CD8-positive, alpha-beta memory T cell (primary cell): ENCODE measurements at regions of chr11 and their contacts with region 1.

Region 1: DNA sequence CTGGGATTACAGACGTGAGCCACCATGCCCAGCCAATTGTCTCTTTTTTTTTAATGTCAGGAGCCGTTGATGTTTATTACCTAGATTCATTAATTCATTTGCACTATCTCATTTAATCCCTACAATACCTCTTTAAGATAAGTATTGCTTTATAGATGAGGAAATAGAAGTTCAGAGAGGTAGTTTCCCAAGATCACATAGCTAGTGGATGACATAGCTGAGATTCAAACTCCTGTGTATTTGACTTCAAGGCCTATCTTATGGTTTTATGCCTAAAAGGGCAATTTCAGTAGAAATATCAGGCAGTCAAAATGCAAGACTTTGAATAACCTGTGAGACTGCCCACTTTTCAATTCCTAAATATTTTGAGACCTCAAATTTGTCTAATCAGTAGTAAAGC is 66.5 kb downstream of the PPME1 start:
- DNase-seq: no peak
- H3K4me3 ChIP-seq: no peak overlapping the region
- H3K4me3 Mint-ChIP-seq: no peak overlapping the region
- H3K27ac ChIP-seq: no peak overlapping the region
- H3K27ac Mint-ChIP-seq: no peak overlapping the region
- H3K4me1 ChIP-seq: peaks cover 27% of the 10 kb centered on the region
- H3K4me1 Mint-ChIP-seq: peaks cover 4 to 7% (median 6%) of the 10 kb centered on the region in 3 donors
- H3K27me3 ChIP-seq: no peaks in the 10 kb centered on the region
- H3K27me3 Mint-ChIP-seq: no peaks in the 10 kb centered on the region

Region 2: GRCh38 chr11:74325649-74326645 is 88.4 kb after region 1 on chr11:
- CTCF ChIA-PET with region 1: no interaction called
- POLR2A ChIA-PET with region 1: interaction called, 12 read pairs
- DNase-seq: no peak
- H3K4me3 ChIP-seq: no peak overlapping the region
- H3K4me3 Mint-ChIP-seq: no peak overlapping the region
- H3K27ac ChIP-seq: no peak overlapping the region
- H3K27ac Mint-ChIP-seq: no peak overlapping the region
- H3K4me1 ChIP-seq: no peaks in the 10 kb centered on the region
- H3K4me1 Mint-ChIP-seq: no peaks in the 10 kb centered on the region
- H3K27me3 ChIP-seq: no peaks in the 10 kb centered on the region
- H3K27me3 Mint-ChIP-seq: peaks cover 3 to 15% of the 10 kb centered on the region in 2 donors

Region 3: DNA sequence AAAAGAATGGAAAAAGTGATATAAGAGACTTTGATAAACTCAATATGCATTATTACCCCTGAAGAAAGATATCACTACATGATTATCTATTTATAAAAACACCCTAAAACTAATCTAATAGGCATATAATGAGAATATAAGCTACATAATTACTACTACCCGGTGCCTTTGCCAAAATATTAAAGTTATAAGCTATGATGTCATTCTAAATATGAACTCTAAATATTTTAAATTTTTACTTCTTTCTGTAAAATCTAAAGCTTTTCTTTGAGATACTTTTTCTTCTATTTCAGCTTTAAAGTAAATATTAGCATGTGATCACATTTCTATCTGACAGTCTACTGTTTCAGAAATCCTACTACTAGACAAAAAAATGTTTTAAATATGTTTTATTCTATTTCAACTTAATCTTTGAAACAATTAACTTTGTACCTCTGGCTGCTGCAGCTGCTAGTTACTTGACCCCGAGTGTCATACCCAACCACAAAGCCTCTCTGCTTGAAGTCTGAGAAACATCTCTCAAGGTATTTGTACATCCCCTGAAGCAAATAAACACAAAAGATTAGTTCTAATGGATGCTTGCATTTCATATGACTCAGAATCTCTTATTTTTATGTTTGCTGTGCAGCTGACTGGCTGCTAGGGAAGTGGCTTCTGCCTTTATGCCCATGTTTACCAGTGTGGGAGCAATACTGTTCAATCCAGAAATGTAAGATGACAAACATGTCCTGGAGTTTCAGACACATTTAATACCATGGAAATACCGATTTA is 133.9 kb after region 1 on chr11:
- CTCF ChIA-PET with region 1: no interaction called
- POLR2A ChIA-PET with region 1: no interaction called
- DNase-seq: no peak
- H3K4me3 ChIP-seq: no peak overlapping the region
- H3K4me3 Mint-ChIP-seq: no peak overlapping the region
- H3K27ac ChIP-seq: no peak overlapping the region
- H3K27ac Mint-ChIP-seq: no peak overlapping the region
- H3K4me1 ChIP-seq: no peaks in the 10 kb centered on the region
- H3K4me1 Mint-ChIP-seq: no peaks in the 10 kb centered on the region
- H3K27me3 ChIP-seq: no peaks in the 10 kb centered on the region
- H3K27me3 Mint-ChIP-seq: no peaks in the 10 kb centered on the region